ENCODE measurements at regions of chr1 and their contacts with region 1.

Region 1: GRCh38 chr1:244864253-244865027 is at the start of gene HNRNPU:
- DNase-seq: peak; percentile 98
- H3K4me3 ChIP-seq: peak within 1 kb of the TSS; percentile 93 to 100 (median 98)
- H3K27ac ChIP-seq: peak within 1 kb of the TSS; percentile 100
- H3K4me1 ChIP-seq: peaks cover 18 to 40% (median 28%) of the 10 kb centered on the region in 4 donors
- H3K27me3 ChIP-seq: no peaks in the 10 kb centered on the region
- CTCF ChIP-seq: peak; percentile 38 to 83 (median 41)
- EP300 ChIP-seq: peak; percentile 46
- POLR2A ChIP-seq: peak; percentile 99
- total RNA-seq, gene HNRNPU: 223 to 364 (median 237) TPM

Region 2: DNA sequence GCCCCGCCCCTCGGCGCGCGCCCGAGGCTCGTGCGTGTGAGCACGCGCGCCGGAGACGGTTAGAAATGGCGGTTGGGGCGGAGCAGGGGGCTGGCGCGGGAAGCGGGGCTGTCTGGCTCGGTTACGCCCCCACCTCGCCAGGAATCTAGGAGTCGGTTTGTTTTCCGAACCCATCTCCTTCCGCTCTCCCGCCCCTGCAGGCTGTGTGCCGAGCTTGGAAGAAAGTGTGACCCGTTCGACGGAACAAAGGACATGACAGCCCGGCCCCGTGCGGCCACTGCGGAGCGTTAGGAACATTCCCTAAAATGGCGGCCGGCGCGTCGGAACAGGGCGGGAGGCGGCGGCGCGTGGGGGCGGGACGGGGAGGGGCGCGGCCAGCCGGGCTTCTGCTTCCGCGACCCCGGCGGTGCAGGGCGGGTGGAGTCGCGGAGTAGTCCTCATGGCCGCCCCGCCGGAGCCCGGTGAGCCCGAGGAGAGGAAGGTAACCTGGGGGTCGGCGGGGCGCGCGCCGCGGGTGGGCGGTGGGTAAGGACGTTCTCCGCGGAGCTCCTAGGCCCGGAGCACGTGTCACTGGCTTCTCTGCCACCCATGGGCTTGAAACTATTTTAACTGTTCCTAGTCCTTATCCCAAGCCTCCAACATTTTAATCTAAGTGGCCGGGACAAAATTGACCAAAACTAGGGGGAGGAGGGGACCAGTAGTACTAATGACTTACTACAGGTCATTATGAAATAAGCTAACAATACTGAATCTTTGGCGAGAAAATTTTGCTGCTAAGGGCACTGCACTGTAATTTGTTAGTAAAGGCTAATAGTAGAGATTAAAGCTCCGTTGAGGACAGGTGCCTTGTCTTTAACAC is 28.9 kb before region 1 on chr1 and contains the start of gene COX20:
- in situ Hi-C with region 1: no loop called
- intact Hi-C with region 1: loop called (anchors 2 kb)
- DNase-seq: peak; percentile 92
- H3K4me3 ChIP-seq: peak within 1 kb of the TSS; percentile 40 to 68 (median 62)
- H3K27ac ChIP-seq: peak within 1 kb of the TSS; percentile 98 to 100 (median 99)
- H3K4me1 ChIP-seq: peaks cover 17 to 47% (median 30%) of the 10 kb centered on the region in 4 donors
- H3K27me3 ChIP-seq: no peaks in the 10 kb centered on the region
- CTCF ChIP-seq: peak in 1 of 5 experiments; percentile 2
- EP300 ChIP-seq: peak; percentile 93
- POLR2A ChIP-seq: peak; percentile 70
- total RNA-seq, gene COX20: 6.0 to 41.3 (median 32.3) TPM

Region 3: DNA sequence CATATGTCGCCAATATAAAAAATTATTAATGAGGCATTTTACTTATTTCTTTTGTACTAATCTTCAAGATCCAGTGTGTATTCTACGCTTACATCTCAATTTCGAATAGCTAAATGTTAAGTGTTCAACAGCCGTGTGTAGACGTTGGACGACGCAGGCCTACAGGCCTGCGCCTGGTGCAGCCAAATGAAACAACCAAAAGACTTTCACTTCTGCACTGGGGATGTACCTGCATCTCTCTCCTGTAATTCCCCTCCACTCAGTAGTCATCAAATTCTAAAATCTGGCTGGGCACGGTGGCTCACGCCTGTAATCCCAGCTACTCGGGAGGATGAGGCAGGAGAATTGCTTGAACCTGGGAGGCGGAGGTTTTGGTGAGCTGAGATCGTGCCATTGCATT is 76.7 kb after region 1 on chr1:
- in situ Hi-C with region 1: no loop called
- intact Hi-C with region 1: no loop called
- DNase-seq: peak; percentile 9
- H3K4me3 ChIP-seq: no peak overlapping the region
- H3K27ac ChIP-seq: no peak overlapping the region
- H3K4me1 ChIP-seq: no peaks in the 10 kb centered on the region
- H3K27me3 ChIP-seq: no peaks in the 10 kb centered on the region
- CTCF ChIP-seq: no peak
- EP300 ChIP-seq: no peak
- POLR2A ChIP-seq: no peak

Region 4: GRCh38 chr1:244970661-244971551 is 106.5 kb after region 1 on chr1:
- in situ Hi-C with region 1: loop called in 2 of 4 experiments (anchors 5 to 10 kb)
- intact Hi-C with region 1: loop called (anchors 2 kb)
- DNase-seq: peak; percentile 93
- H3K4me3 ChIP-seq: peak overlapping the region; percentile 73 to 87 (median 80)
- H3K27ac ChIP-seq: peak overlapping the region; percentile 99 to 100 (median 100)
- H3K4me1 ChIP-seq: peaks cover 5 to 24% (median 9%) of the 10 kb centered on the region in 4 donors
- H3K27me3 ChIP-seq: no peaks in the 10 kb centered on the region
- CTCF ChIP-seq: peak; percentile 43 to 96 (median 67)
- EP300 ChIP-seq: no peak
- POLR2A ChIP-seq: peak; percentile 89

Region 5: GRCh38 chr1:245045087-245045881 is 180.8 kb after region 1 on chr1:
- in situ Hi-C with region 1: no loop called
- intact Hi-C with region 1: loop called (anchors 5 kb)
- DNase-seq: peak; percentile 75
- H3K4me3 ChIP-seq: no peak overlapping the region
- H3K27ac ChIP-seq: peak overlapping the region; percentile 29 to 65 (median 37)
- H3K4me1 ChIP-seq: peaks cover 0 to 29% (median 13%) of the 10 kb centered on the region in 4 donors
- H3K27me3 ChIP-seq: no peaks in the 10 kb centered on the region
- CTCF ChIP-seq: no peak
- EP300 ChIP-seq: no peak
- POLR2A ChIP-seq: peak; percentile 32